Common myeloid progenitor, CD34-positive (primary cell): ENCODE measurements at regions of chr11 and their contacts with region 1.

Region 1: GRCh38 chr11:78000193-78000592 is 5.7 kb upstream of the INTS4 start:
- DNase-seq: peak; percentile 67 to 86 (median 84)
- H3K4me3 ChIP-seq: no peak overlapping the region
- H3K27ac ChIP-seq: no peak overlapping the region
- H3K4me1 ChIP-seq: peaks cover 1 to 5% (median 3%) of the 10 kb centered on the region in 4 experiments
- H3K27me3 ChIP-seq: peaks cover 0 to 2% (median 0%) of the 10 kb centered on the region in 5 experiments

Region 2: DNA sequence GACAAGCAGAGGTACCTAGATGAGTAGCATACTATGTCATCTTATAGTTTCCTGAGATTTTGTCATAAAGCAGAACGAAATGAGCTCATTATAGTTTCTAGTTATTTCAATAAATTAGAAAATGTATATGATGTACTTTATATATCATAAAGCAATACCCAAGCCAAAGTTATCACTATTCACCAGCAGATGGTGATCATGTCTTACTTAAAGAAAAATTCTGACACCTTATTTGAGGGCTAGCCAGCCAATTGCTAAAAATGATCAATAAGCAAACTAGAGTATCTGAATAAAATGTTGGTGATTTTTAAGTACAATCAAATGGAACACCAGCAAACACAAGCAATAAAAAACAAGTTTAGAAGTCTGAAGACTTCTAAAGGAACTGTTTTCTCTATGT is 223.7 kb before region 1 on chr11:
- CTCF ChIA-PET with region 1: interaction called, 21 read pairs
- POLR2A ChIA-PET with region 1: no interaction called
- DNase-seq: peak; percentile 34 to 60 (median 56)
- H3K4me3 ChIP-seq: no peak overlapping the region
- H3K27ac ChIP-seq: no peak overlapping the region
- H3K4me1 ChIP-seq: peaks cover 0 to 9% (median 4%) of the 10 kb centered on the region in 4 experiments
- H3K27me3 ChIP-seq: no peaks in the 10 kb centered on the region

Region 3: DNA sequence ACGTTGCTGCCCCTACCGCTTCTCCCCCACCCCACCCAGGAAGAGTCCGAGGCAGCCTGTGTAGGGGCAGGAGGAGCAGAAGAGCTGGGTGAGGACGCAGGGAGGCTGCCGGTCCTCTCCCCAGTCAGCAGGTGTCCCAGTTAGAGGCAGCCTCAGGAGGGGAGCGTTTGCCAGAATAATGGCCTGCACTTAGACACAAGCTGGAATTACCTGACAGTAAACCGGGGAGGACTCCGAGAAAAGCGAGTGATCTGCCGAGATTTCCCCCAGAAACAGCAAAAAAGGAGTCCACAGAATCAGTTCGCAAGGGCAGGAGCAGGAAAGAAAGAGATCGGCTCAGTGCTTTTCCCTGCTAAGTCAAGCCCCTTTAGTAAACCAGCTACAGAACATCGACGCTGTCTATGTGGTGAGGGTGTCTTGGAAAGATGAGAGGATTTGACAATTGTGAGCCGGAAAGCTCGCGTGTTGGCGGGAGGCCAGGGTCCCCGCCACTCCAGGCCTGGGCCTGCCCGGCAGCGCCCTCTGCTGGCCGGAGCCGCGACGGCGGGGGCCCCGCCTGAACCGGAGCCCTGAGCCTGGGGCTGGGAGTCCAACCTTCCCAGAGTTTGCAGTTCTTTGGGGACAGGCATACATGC is 45.8 kb after region 1 on chr11:
- CTCF ChIA-PET with region 1: interaction called, 31 read pairs
- POLR2A ChIA-PET with region 1: no interaction called
- DNase-seq: peak; percentile 45 to 73 (median 63)
- H3K4me3 ChIP-seq: peak overlapping the region in 4 of 7 experiments; percentile 37 to 71 (median 42)
- H3K27ac ChIP-seq: no peak overlapping the region
- H3K4me1 ChIP-seq: peaks cover 0 to 16% (median 9%) of the 10 kb centered on the region in 4 experiments
- H3K27me3 ChIP-seq: no peaks in the 10 kb centered on the region